ENCODE measurements at regions of chr13 and their contacts with region 1.

Region 1: DNA sequence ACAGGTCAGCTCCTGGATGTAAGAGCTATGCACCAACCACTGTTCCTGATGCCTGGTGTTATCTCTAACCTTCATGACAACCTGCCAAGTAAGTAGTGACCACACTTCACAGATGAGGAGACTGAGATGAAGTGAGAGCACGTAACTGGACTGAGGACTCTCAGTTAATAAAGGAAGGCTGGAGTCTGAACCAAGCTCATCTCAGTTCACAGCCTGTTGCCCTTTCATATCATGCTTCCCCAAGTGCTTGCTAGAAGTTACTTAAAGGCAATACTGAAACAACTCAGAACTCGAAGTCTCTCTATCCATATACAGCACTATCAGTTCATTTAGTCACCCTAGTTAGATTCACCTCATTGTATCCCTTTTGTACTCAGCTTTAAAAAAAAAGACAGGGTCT is 119.7 kb downstream of the ABCC4 start:
- DNase-seq: no peak
- ATAC-seq: peak; percentile 45
- H3K4me3 Mint-ChIP-seq: no peak overlapping the region
- H3K27ac Mint-ChIP-seq: peak overlapping the region; percentile 14
- H3K4me1 Mint-ChIP-seq: peaks cover 73% of the 10 kb centered on the region
- H3K27me3 Mint-ChIP-seq: no peaks in the 10 kb centered on the region

Region 2: GRCh38 chr13:94660695-94661326 is 520.8 kb before region 1 on chr13:
- CTCF ChIA-PET with region 1: no interaction called
- POLR2A ChIA-PET with region 1: no interaction called
- intact Hi-C with region 1: loop called (anchors 5 to 10 kb)
- DNase-seq: peak; percentile 42
- ATAC-seq: peak; percentile 24
- H3K4me3 Mint-ChIP-seq: no peak overlapping the region
- H3K27ac Mint-ChIP-seq: no peak overlapping the region
- H3K4me1 Mint-ChIP-seq: peaks cover 37% of the 10 kb centered on the region
- H3K27me3 Mint-ChIP-seq: peaks cover 31% of the 10 kb centered on the region

Region 3: GRCh38 chr13:94667190-94667589 is 514.4 kb before region 1 on chr13:
- CTCF ChIA-PET with region 1: interaction called, 3 read pairs
- POLR2A ChIA-PET with region 1: no interaction called
- intact Hi-C with region 1: loop called (anchors 5 to 10 kb)
- DNase-seq: peak; percentile 44
- ATAC-seq: peak; percentile 88
- H3K4me3 Mint-ChIP-seq: no peak overlapping the region
- H3K27ac Mint-ChIP-seq: peak overlapping the region; percentile 89
- H3K4me1 Mint-ChIP-seq: peaks cover 38% of the 10 kb centered on the region
- H3K27me3 Mint-ChIP-seq: peaks cover 21% of the 10 kb centered on the region

Region 4: DNA sequence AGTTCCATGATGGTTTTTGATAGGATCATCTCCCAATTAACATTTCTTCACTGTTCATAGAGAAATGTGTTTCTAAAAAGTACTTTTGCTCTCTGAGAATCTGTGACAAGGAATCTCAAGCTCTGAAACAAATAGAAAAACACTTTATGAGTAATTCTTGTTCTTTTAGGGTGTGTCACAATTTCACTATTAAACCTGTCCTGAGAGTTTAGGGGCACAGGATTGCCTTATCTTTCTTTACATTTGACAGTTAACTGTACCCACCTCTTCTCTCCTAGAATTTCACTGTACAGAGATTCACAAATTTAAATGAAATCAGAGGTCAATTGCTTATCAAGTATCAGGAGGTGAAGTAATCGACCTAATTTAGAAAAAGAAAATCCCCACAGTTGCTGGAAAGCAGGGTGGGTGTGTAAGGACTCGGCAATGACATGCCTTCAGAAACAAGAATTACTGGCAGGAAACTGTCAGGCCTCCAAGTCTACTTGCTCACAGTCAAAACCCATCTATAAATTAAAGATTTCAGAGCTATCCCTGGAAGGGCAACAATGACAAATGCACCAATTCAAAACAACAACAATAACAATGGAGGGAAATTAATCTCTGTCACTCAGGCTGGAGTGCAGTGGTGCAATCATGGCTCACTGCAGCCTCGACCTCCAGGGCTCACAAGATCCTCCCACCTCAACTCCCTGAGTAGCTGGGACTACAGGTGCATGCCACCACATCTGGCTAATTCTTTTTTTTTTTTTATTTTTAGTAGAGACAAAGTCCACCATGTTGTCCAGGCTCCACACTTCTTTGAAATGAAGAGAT is 130.6 kb before region 1 on chr13:
- CTCF ChIA-PET with region 1: no interaction called
- POLR2A ChIA-PET with region 1: no interaction called
- intact Hi-C with region 1: loop called in 1 of 2 experiments (anchors 1 kb)
- DNase-seq: peak; percentile 24
- ATAC-seq: peak; percentile 86
- H3K4me3 Mint-ChIP-seq: no peak overlapping the region
- H3K27ac Mint-ChIP-seq: no peak overlapping the region
- H3K4me1 Mint-ChIP-seq: peaks cover 21% of the 10 kb centered on the region
- H3K27me3 Mint-ChIP-seq: no peaks in the 10 kb centered on the region

Region 5: GRCh38 chr13:95301183-95301967 is 119.8 kb after region 1 on chr13 and contains the start of gene ABCC4:
- CTCF ChIA-PET with region 1: no interaction called
- POLR2A ChIA-PET with region 1: no interaction called
- intact Hi-C with region 1: loop called in 1 of 2 experiments (anchors 5 kb)
- DNase-seq: peak; percentile 76
- ATAC-seq: peak; percentile 81
- H3K4me3 Mint-ChIP-seq: peak within 1 kb of the TSS; percentile 78
- H3K27ac Mint-ChIP-seq: peak within 1 kb of the TSS; percentile 66
- H3K4me1 Mint-ChIP-seq: peaks cover 43% of the 10 kb centered on the region
- H3K27me3 Mint-ChIP-seq: peaks cover 8% of the 10 kb centered on the region
- total RNA-seq, gene ABCC4: 9.0 to 9.5 TPM